ENCODE measurements at regions of chr7 and their contacts with region 1.

Region 1: GRCh38 chr7:152424348-152425108 is 11.3 kb downstream of the KMT2C start:
- DNase-seq: no peak
- H3K4me3 ChIP-seq: no peak overlapping the region
- H3K27ac ChIP-seq: no peak overlapping the region
- H3K4me1 ChIP-seq: peaks cover 26 to 27% of the 10 kb centered on the region in 2 donors
- H3K27me3 ChIP-seq: no peaks in the 10 kb centered on the region
- CTCF ChIP-seq: no peak
- POLR2A ChIP-seq: no peak

Region 2: GRCh38 chr7:152108359-152108758 is 316.2 kb before region 1 on chr7:
- intact Hi-C with region 1: no loop called
- DNase-seq: no peak
- H3K4me3 ChIP-seq: no peak overlapping the region
- H3K27ac ChIP-seq: no peak overlapping the region
- H3K4me1 ChIP-seq: peaks cover 0 to 3% of the 10 kb centered on the region in 2 donors
- H3K27me3 ChIP-seq: no peaks in the 10 kb centered on the region
- CTCF ChIP-seq: no peak
- POLR2A ChIP-seq: no peak

Region 3: DNA sequence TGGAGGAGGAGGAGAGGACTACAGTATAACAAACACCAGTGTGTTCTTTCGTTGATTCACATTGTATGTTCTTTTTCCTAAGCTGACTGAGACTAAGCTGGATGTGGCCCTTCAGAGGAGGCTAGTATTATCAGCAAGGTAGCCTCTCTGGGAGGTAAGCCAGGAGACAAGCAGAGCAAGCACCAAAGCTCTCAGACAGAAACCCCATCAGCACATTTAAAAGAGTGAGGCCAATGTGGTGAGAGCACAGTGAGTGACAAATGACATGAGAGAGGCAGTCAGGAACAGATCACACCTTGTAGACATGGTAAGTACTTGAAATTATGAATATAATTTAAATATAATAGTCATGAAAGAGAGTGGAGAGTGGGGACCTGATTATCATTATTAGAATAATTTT is 96.3 kb before region 1 on chr7:
- intact Hi-C with region 1: loop called (anchors 10 kb)
- DNase-seq: no peak
- H3K4me3 ChIP-seq: no peak overlapping the region
- H3K27ac ChIP-seq: no peak overlapping the region
- H3K4me1 ChIP-seq: peaks cover 0 to 5% of the 10 kb centered on the region in 2 donors
- H3K27me3 ChIP-seq: no peaks in the 10 kb centered on the region
- CTCF ChIP-seq: no peak
- POLR2A ChIP-seq: no peak

Region 4: DNA sequence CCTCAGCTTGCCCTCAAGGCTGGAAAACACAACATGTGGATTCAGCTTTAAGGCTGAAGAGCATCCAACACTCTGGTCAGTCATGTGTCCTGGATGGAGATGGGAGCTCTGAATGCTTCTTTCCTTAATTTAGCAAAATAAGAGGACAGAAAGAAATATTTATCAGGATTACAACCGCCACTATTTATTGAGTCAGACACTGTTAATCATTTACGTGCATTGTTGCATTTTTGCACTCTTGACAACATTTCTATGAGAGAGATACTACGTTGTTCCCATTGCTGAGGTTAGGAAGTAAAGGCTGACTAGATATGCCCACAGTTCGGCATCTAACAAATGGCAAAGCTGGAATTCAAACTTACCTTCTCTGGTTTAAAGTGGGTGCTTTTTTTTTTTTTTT is 113.1 kb after region 1 on chr7:
- intact Hi-C with region 1: no loop called
- DNase-seq: no peak
- H3K4me3 ChIP-seq: no peak overlapping the region
- H3K27ac ChIP-seq: no peak overlapping the region
- H3K4me1 ChIP-seq: no peaks in the 10 kb centered on the region
- H3K27me3 ChIP-seq: no peaks in the 10 kb centered on the region
- CTCF ChIP-seq: no peak
- POLR2A ChIP-seq: no peak